MCF 10A (cell line): ENCODE measurements at regions of chr2 and their contacts with region 1.

Region 1: GRCh38 chr2:68751397-68752339 is 17.1 kb downstream of the ARHGAP25 start:
- DNase-seq: peak; percentile 90
- H3K4me3 Mint-ChIP-seq: no peak overlapping the region
- H3K27ac Mint-ChIP-seq: peak overlapping the region; percentile 28
- H3K4me1 Mint-ChIP-seq: peaks cover 17% of the 10 kb centered on the region
- H3K27me3 Mint-ChIP-seq: no peaks in the 10 kb centered on the region
- CTCF ChIP-seq: peak; percentile 91

Region 2: DNA sequence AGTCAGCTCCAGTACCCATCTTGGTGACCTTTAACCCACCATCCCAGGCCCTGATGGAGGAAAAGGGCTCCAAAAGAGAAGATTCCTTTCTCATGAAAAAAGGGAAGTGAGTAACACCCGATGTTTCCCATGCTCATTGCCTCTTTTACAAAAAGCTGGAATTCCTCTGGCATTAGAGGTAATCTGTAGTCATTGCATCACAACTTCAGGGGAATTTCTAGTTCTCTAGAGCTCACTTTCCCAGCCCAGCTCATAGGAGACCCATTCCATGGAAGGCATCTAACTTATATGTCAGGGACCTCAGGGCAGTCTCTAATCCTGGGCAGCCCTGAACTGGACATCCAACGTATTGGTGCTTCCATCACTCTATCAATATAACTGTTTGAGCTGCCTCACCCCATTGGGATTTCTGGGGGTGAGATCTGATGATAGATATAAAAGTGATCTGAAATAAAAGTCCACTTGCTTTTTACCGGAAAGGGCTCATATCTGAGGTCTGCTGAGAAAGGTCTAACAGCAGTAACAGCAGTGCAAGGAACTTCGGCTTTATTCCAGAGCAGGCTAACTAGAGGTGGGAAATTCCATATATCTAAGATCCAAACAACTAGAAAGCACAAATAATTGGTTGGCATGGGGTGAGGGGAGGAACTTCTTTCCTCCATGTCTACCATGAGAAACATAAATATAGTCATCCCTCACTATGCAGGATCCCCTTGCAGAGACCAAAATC is 1248.4 kb before region 1 on chr2:
- CTCF ChIA-PET with region 1: no interaction called
- POLR2A ChIA-PET with region 1: no interaction called
- intact Hi-C with region 1: no loop called
- DNase-seq: peak; percentile 75
- H3K4me3 Mint-ChIP-seq: no peak overlapping the region
- H3K27ac Mint-ChIP-seq: no peak overlapping the region
- H3K4me1 Mint-ChIP-seq: peaks cover 17% of the 10 kb centered on the region
- H3K27me3 Mint-ChIP-seq: no peaks in the 10 kb centered on the region
- CTCF ChIP-seq: no peak

Region 3: GRCh38 chr2:68605939-68606338 is 145.7 kb before region 1 on chr2:
- CTCF ChIA-PET with region 1: no interaction called
- POLR2A ChIA-PET with region 1: no interaction called
- intact Hi-C with region 1: no loop called
- DNase-seq: no peak
- H3K4me3 Mint-ChIP-seq: no peak overlapping the region
- H3K27ac Mint-ChIP-seq: no peak overlapping the region
- H3K4me1 Mint-ChIP-seq: no peaks in the 10 kb centered on the region
- H3K27me3 Mint-ChIP-seq: no peaks in the 10 kb centered on the region
- CTCF ChIP-seq: no peak

Region 4: DNA sequence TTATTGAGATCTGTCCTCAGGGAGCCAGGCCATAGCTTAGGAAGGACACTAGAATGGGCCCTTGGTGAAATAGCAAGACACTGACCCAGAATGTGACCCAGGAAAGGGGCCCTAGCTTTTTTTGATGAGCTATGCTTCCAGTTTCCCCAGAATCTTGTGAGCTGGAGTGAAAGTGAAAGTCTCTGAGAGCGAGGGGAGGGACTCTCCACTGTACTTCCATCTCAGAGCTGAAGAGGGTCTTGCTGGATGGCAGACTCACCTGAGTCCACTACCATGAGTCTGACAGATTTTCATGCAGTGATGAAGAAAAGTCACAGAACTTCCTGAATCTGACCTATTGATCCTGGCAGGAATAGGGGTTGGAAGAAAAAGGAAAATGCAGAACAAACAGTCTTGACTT is 14.0 kb before region 1 on chr2:
- CTCF ChIA-PET with region 1: interaction called, 64 read pairs
- POLR2A ChIA-PET with region 1: interaction called, 4 read pairs
- intact Hi-C with region 1: no loop called
- DNase-seq: no peak
- H3K4me3 Mint-ChIP-seq: no peak overlapping the region
- H3K27ac Mint-ChIP-seq: no peak overlapping the region
- H3K4me1 Mint-ChIP-seq: peaks cover 17% of the 10 kb centered on the region
- H3K27me3 Mint-ChIP-seq: no peaks in the 10 kb centered on the region
- CTCF ChIP-seq: no peak

Region 5: DNA sequence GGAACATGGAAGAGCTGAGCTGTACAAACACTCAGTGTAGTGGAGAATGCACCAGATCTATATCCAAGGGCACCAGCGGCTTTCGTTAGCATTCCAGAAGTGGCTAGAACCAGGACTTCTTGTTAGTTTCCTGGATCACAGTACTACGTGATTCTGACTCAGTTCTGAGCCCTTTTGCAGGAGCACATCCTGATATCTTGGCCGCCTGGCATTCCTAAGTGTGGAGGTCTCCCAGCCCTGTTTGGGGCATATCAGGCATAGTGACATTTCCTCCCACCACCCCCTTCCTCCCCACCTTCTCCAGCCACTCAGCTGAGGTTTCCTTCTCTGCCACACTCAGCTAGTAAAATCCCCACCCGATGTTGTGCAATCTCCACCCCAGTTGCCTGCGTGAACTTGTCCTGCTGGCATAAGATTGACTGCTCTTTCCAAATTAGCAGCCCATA is 56.2 kb after region 1 on chr2:
- CTCF ChIA-PET with region 1: interaction called, 17 read pairs
- POLR2A ChIA-PET with region 1: interaction called, 5 read pairs
- intact Hi-C with region 1: no loop called
- DNase-seq: peak; percentile 91
- H3K4me3 Mint-ChIP-seq: peak overlapping the region; percentile 27
- H3K27ac Mint-ChIP-seq: peak overlapping the region; percentile 68
- H3K4me1 Mint-ChIP-seq: peaks cover 74% of the 10 kb centered on the region
- H3K27me3 Mint-ChIP-seq: no peaks in the 10 kb centered on the region
- CTCF ChIP-seq: no peak

Region 6: GRCh38 chr2:68849579-68850030 is 97.9 kb after region 1 on chr2:
- CTCF ChIA-PET with region 1: interaction called, 14 read pairs
- POLR2A ChIA-PET with region 1: no interaction called
- intact Hi-C with region 1: no loop called
- DNase-seq: no peak
- H3K4me3 Mint-ChIP-seq: no peak overlapping the region
- H3K27ac Mint-ChIP-seq: no peak overlapping the region
- H3K4me1 Mint-ChIP-seq: no peaks in the 10 kb centered on the region
- H3K27me3 Mint-ChIP-seq: peaks cover 24% of the 10 kb centered on the region
- CTCF ChIP-seq: no peak

Region 7: DNA sequence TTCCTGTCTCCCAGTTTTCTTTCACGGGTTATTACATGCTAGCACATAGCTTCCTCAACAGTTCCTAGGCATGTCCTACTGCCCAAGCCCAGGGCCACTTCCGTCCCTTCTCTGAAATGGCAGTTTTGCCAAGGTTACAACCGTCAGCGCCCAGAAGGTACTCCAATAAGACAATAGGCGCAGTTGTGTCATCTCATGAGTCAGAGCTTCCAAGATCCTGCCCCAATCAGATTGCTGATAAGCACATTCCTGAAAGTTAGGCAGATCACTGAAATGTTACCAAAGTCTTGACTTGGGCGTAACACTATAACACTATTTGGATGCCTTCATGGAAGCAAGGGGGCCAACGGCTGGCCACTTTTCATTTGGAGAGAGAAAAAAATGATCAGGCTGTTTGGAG is 166.8 kb after region 1 on chr2:
- CTCF ChIA-PET with region 1: interaction called, 110 read pairs
- POLR2A ChIA-PET with region 1: interaction called, 3 read pairs
- intact Hi-C with region 1: no loop called
- DNase-seq: peak; percentile 65
- H3K4me3 Mint-ChIP-seq: no peak overlapping the region
- H3K27ac Mint-ChIP-seq: peak overlapping the region; percentile 44
- H3K4me1 Mint-ChIP-seq: peaks cover 17% of the 10 kb centered on the region
- H3K27me3 Mint-ChIP-seq: no peaks in the 10 kb centered on the region
- CTCF ChIP-seq: no peak